SK-N-SH (cell line): ENCODE measurements at regions of chr17 and their contacts with region 1.

Region 1: GRCh38 chr17:74566132-74566753 is 1.1 kb downstream of the CD300H start:
- DNase-seq: peak; percentile 82
- H3K4me3 ChIP-seq: no peak overlapping the region; a peak in 1 of 4 replicates
- H3K27ac ChIP-seq: no peak overlapping the region
- H3K4me1 ChIP-seq: no peaks in the 10 kb centered on the region
- H3K27me3 ChIP-seq: no peaks in the 10 kb centered on the region
- CTCF ChIP-seq: peak; percentile 22
- EP300 ChIP-seq: no peak
- RAD21 ChIP-seq: peak; percentile 74

Region 2: GRCh38 chr17:74203439-74204240 is 362.6 kb before region 1 on chr17 and contains the start of gene RPL38:
- CTCF ChIA-PET with region 1: no interaction called
- POLR2A ChIA-PET with region 1: no interaction called
- DNase-seq: peak; percentile 98
- H3K4me3 ChIP-seq: peak within 1 kb of the TSS; percentile 72 to 99
- H3K27ac ChIP-seq: peak within 1 kb of the TSS; percentile 63 to 81
- H3K4me1 ChIP-seq: peaks cover 22 to 36% of the 10 kb centered on the region in 2 experiments
- H3K27me3 ChIP-seq: no peaks in the 10 kb centered on the region
- CTCF ChIP-seq: peak; percentile 99
- EP300 ChIP-seq: peak in 1 of 2 experiments; percentile 75; a peak in 3 of 4 replicates
- RAD21 ChIP-seq: peak; percentile 57
- polyA plus RNA-seq, gene RPL38: 816 and 4,154 TPM in 2 replicates

Region 3: GRCh38 chr17:74528491-74529199 is 37.6 kb before region 1 on chr17:
- CTCF ChIA-PET with region 1: interaction called, 18 read pairs
- POLR2A ChIA-PET with region 1: no interaction called
- DNase-seq: no peak
- H3K4me3 ChIP-seq: no peak overlapping the region
- H3K27ac ChIP-seq: no peak overlapping the region
- H3K4me1 ChIP-seq: no peaks in the 10 kb centered on the region
- H3K27me3 ChIP-seq: no peaks in the 10 kb centered on the region
- CTCF ChIP-seq: no peak
- EP300 ChIP-seq: no peak
- RAD21 ChIP-seq: no peak

Region 4: GRCh38 chr17:74584292-74585060 is 18.2 kb after region 1 on chr17:
- CTCF ChIA-PET with region 1: interaction called, 72 read pairs
- POLR2A ChIA-PET with region 1: no interaction called
- DNase-seq: no peak
- H3K4me3 ChIP-seq: no peak overlapping the region
- H3K27ac ChIP-seq: no peak overlapping the region
- H3K4me1 ChIP-seq: no peaks in the 10 kb centered on the region
- H3K27me3 ChIP-seq: no peaks in the 10 kb centered on the region
- CTCF ChIP-seq: no peak
- EP300 ChIP-seq: no peak
- RAD21 ChIP-seq: no peak

Region 5: DNA sequence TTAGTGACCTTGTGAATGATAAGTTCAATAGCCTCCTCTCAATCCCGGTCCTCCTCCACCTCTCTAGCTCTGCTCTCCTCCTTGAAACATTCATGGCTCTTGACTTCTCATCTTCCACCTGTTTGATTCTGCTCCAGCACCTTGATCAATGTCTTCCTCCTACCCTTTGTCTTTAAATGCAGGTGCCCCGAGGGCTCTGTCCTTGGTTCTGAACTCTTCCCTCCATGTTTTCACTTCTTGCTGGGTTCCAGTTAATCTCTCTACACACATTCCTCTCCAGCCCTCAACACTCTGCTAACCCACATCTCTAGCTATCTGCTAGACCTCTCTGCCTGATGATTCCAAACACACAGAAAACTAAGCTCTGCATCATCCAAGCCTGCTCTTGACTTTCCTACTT is 43.9 kb after region 1 on chr17:
- CTCF ChIA-PET with region 1: interaction called, 28 read pairs
- POLR2A ChIA-PET with region 1: no interaction called
- DNase-seq: no peak
- H3K4me3 ChIP-seq: no peak overlapping the region
- H3K27ac ChIP-seq: no peak overlapping the region
- H3K4me1 ChIP-seq: no peaks in the 10 kb centered on the region
- H3K27me3 ChIP-seq: no peaks in the 10 kb centered on the region
- CTCF ChIP-seq: no peak
- EP300 ChIP-seq: no peak
- RAD21 ChIP-seq: no peak

Region 6: DNA sequence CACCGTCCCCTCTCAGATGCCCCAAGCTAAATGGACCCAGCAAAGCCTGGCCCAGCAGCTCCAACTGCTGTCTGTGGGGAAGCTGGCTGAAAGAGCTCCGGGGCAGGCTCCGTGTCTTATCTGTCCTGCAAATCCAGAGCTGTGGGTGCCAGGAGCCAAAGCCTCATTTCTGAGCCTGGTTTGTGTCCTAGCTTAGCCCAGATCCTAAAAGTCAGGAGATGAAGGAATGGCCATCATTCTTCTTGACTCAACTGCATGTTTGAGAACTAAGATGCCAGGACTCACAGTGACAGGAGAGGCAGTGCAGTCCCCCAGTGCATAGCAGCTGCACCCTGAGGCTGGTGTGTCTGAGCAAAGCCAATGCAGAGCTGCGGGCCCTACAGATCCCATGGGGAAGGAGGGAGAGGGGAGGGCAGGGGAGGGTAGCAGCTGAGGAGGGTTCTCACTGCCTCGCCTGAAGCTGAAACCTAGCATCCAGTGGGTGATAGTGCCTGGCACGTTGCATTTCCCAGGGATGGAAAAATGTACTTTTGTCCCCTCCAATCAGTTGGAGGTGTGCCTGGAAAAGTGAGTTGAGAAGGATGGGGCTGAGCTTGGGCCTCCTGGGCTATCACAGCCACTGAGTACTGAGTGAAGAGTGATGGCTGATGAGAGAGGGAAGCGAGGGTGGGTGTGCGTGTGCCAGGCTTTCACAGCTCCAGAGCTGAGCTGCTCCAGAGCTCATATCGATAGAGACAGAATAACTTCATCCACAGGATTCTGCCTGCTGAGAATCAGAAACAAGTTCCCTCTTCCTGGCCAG is 81.8 kb after region 1 on chr17:
- CTCF ChIA-PET with region 1: interaction called, 12 read pairs
- POLR2A ChIA-PET with region 1: no interaction called
- DNase-seq: peak; percentile 67
- H3K4me3 ChIP-seq: no peak overlapping the region
- H3K27ac ChIP-seq: peak overlapping the region in 1 of 2 experiments; percentile 17; a peak in 1 of 4 replicates
- H3K4me1 ChIP-seq: peaks cover 0 to 26% of the 10 kb centered on the region in 2 experiments; a peak in 1 of 4 replicates
- H3K27me3 ChIP-seq: no peaks in the 10 kb centered on the region
- CTCF ChIP-seq: no peak
- EP300 ChIP-seq: peak in 1 of 2 experiments; percentile 60; a peak in 1 of 4 replicates
- RAD21 ChIP-seq: no peak

Region 7: GRCh38 chr17:74748529-74749365 is 182.5 kb after region 1 on chr17 and contains the start of gene NHERF1:
- CTCF ChIA-PET with region 1: interaction called, 28 read pairs
- POLR2A ChIA-PET with region 1: no interaction called
- DNase-seq: peak; percentile 100
- H3K4me3 ChIP-seq: peak within 1 kb of the TSS; percentile 90 to 97
- H3K27ac ChIP-seq: peak within 1 kb of the TSS in 1 of 2 experiments; percentile 77; a peak in 2 of 4 replicates
- H3K4me1 ChIP-seq: peaks cover 0 to 29% of the 10 kb centered on the region in 2 experiments; a peak in 1 of 4 replicates
- H3K27me3 ChIP-seq: no peaks in the 10 kb centered on the region
- CTCF ChIP-seq: peak; percentile 36
- EP300 ChIP-seq: peak in 1 of 2 experiments; percentile 30; a peak in 1 of 4 replicates
- RAD21 ChIP-seq: peak; percentile 54
- polyA plus RNA-seq, gene NHERF1: 26.9 and 40.1 TPM in 2 replicates